ENCODE measurements at regions of chr3 and their contacts with region 1.

Region 1: DNA sequence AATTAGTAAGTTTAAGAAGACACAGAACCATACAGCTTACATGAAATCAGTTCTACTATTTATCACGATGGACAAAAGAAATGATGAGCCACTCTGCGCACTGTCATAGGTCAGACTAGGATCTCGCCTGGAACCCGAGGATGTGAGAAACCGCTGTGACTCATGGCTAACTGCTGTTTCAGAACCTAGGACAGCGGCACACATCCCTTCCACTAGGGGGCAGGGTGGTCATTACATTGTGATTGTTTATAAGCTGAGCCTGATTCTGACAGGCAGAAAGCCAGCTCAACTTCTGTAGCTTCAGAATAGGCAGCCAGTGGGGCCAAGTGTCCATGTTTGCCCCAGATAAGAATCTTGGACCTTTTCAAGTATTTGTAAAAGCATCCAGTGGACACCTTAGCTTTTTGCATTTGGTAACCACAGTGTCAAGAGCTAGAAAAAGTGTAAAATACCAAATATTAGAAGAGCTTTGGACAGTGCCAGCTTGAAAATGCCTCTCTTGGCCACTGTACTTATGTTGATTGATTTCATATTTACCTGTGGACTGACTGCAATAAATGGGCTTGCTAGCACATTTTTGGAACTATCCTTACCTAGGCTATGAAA is 115.8 kb downstream of the KBTBD8 start:
- DNase-seq: peak; percentile 36
- H3K4me3 ChIP-seq: no peak overlapping the region
- H3K27me3 ChIP-seq: no peaks in the 10 kb centered on the region
- CTCF ChIP-seq: peak; percentile 95

Region 2: GRCh38 chr3:67094774-67095173 is 19.1 kb before region 1 on chr3:
- CTCF ChIA-PET with region 1: interaction called, 11 read pairs
- POLR2A ChIA-PET with region 1: no interaction called
- DNase-seq: no peak
- H3K4me3 ChIP-seq: no peak overlapping the region
- H3K27me3 ChIP-seq: no peaks in the 10 kb centered on the region
- CTCF ChIP-seq: no peak

Region 3: GRCh38 chr3:67790043-67790442 is 676.1 kb after region 1 on chr3:
- CTCF ChIA-PET with region 1: interaction called, 24 read pairs
- POLR2A ChIA-PET with region 1: no interaction called
- DNase-seq: no peak
- H3K4me3 ChIP-seq: no peak overlapping the region
- H3K27me3 ChIP-seq: no peaks in the 10 kb centered on the region
- CTCF ChIP-seq: peak; percentile 71

Region 4: DNA sequence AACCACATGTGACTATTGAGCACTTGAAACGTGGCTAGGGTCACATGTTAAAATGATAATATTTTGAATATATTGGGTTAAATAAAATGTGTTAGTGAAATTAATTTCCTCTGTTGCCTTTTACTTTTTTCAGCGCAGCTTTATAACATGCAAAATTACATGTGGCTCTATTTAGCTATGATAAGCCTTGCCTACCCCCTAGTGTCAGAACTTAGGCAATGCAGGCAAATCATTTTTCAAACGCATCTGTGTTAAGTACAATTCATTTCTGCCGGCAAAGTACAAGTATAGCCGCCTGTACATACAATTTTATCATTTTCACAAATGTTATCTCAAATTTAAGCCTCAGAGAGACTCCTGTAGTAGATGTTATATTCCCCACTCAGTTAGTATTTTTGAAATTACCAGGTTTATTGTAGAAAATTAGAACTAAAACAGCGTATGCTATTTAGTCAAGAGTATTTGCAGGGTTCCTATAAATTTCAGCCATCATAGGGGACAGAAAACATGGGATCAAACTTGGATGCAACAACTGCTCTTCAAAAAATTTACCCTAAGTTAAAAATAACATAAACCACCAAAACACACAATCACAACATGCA is 1762.3 kb after region 1 on chr3:
- CTCF ChIA-PET with region 1: interaction called, 33 read pairs
- POLR2A ChIA-PET with region 1: no interaction called
- DNase-seq: peak; percentile 15
- H3K4me3 ChIP-seq: no peak overlapping the region
- H3K27me3 ChIP-seq: no peaks in the 10 kb centered on the region; the same call in 1 of the 2 replicates
- CTCF ChIP-seq: peak; percentile 84